ENCODE measurements at regions of chr22 and their contacts with region 1.

Region 1: GRCh38 chr22:19762315-19763140 is 1.9 kb downstream of the TBX1 start:
- DNase-seq: no peak
- H3K4me3 ChIP-seq: no peak overlapping the region
- H3K27ac ChIP-seq: peak overlapping the region in 1 of 2 experiments; percentile 43
- H3K4me1 ChIP-seq: peaks cover 0 to 54% (median 35%) of the 10 kb centered on the region in 4 experiments
- H3K27me3 ChIP-seq: peaks cover 0 to 93% (median 42%) of the 10 kb centered on the region in 5 experiments

Region 2: DNA sequence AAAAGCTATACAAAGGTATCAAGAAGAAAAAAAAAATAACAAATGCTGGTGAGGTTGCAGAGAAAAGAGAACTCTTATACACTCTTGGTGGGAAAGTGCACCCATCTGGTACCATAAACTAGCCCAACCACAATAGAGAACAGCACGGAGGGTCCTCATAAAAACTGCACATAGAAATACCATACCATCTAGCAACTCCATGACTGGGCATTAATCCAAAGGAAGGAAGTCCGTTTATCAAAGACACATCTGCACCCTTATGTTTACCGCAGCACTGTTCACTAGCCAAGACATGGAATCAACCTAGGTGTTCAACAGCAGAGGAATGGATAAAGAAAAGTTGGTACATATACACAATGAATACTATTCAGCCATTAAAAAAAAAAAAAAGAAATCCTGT is 227.5 kb before region 1 on chr22:
- CTCF ChIA-PET with region 1: no interaction called
- POLR2A ChIA-PET with region 1: no interaction called
- DNase-seq: peak; percentile 81 to 96 (median 94)
- H3K4me3 ChIP-seq: no peak overlapping the region
- H3K27ac ChIP-seq: no peak overlapping the region
- H3K4me1 ChIP-seq: peaks cover 0 to 25% (median 13%) of the 10 kb centered on the region in 4 experiments
- H3K27me3 ChIP-seq: no peaks in the 10 kb centered on the region

Region 3: DNA sequence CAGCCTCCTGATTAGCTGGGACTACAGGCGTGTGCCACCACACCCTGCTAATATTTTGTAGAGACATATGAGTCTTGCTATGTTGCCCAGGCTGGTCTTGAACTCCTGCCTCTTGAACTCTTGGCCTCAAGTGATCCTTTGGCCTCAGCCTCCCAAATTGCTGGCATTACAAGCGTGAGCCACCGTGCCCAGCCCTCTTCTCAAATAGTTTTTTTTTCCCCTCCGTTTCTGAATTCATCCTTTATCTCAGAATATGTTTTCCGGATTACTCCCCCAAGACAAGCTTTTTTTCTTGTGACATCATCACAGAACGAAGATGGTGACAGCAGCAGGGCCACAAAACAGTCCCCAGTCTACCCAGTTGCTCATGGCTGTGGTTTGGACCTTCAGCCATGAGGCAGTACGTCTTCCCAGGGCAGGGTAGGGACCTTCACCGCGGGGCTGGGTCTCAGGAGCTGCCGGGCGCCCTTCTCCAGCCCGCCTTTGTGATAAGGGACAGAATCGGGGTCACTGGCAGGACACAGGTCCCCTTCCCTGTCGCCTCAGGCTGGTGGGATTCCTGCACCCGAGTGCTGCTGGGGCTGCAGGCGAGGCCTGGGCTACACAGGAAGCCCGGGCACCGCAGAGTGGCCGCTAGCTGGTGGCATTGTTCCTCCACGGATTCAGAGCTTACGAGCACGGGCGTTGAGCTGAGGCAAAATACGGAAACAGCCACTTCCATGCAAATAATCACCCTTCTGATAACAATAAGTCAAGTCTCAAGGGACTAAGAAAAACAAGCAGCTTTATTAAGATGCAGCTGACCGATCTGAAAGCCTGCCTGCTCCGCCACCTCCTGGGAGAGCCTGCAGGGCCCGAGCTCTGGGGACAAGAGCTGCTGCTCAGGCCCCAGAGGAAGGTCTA is 10.1 kb after region 1 on chr22:
- CTCF ChIA-PET with region 1: interaction called, 14 read pairs
- POLR2A ChIA-PET with region 1: no interaction called
- DNase-seq: peak; percentile 57 to 89 (median 85)
- H3K4me3 ChIP-seq: peak overlapping the region in 3 of 7 experiments; percentile 35 to 53 (median 41)
- H3K27ac ChIP-seq: peak overlapping the region in 1 of 2 experiments; percentile 30
- H3K4me1 ChIP-seq: peaks cover 0 to 37% (median 31%) of the 10 kb centered on the region in 4 experiments
- H3K27me3 ChIP-seq: peaks cover 0 to 30% (median 16%) of the 10 kb centered on the region in 5 experiments